CD8-positive, alpha-beta memory T cell (primary cell): ENCODE measurements at regions of chr1 and their contacts with region 1.

Region 1: DNA sequence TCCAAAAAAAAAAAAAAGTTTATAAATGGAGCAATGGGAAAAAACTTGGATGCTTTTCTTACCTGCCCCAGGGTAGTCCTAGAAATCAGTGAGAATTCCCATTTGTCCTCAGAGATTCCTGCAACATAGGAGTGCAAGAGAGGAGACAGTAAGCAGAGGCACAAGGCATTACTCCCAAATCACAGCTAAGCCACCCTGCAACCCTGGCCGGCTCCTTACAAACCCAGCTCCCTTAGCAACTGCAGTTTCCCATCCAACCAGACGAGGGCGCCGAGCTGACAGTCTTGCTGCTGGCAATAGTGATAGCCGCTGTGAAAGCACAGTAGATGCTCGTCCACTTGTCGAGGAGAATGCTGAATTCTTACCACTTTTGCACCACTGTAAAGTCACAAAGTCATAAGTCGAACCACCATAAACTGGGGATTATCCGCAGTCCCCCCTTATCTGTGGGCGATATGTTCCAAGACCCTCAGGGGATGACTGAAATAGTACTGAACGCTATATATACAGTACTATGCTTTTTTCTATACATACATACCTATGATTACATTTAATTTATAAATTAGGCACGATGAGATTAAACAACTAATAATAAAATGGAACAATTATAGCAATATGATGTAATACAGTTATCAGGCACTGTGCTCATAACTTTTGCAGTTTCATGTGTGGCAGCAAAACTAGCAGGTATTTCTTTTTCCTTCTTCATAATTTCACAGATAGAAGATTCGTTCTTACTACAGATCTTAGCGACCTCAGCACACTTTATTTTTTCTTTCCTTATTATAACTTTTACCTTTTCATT is 6.0 kb upstream of the PITHD1 start:
- DNase-seq: peak; percentile 71 to 87 (median 75)
- H3K4me3 ChIP-seq: no peak overlapping the region
- H3K4me3 Mint-ChIP-seq: peak overlapping the region in 2 of 7 donors; percentile 43 to 47
- H3K27ac ChIP-seq: no peak overlapping the region
- H3K27ac Mint-ChIP-seq: peak overlapping the region in 4 of 8 donors; percentile 9 to 47 (median 32)
- H3K4me1 ChIP-seq: peaks cover 8% of the 10 kb centered on the region
- H3K4me1 Mint-ChIP-seq: peaks cover 16 to 25% (median 24%) of the 10 kb centered on the region in 3 donors
- H3K27me3 ChIP-seq: no peaks in the 10 kb centered on the region
- H3K27me3 Mint-ChIP-seq: no peaks in the 10 kb centered on the region

Region 2: GRCh38 chr1:23417570-23417969 is 354.7 kb before region 1 on chr1:
- CTCF ChIA-PET with region 1: no interaction called
- POLR2A ChIA-PET with region 1: no interaction called
- DNase-seq: peak in 1 of 5 donors; percentile 23
- H3K4me3 ChIP-seq: no peak overlapping the region
- H3K4me3 Mint-ChIP-seq: no peak overlapping the region
- H3K27ac ChIP-seq: no peak overlapping the region
- H3K27ac Mint-ChIP-seq: no peak overlapping the region
- H3K4me1 ChIP-seq: peaks cover 12% of the 10 kb centered on the region
- H3K4me1 Mint-ChIP-seq: peaks cover 8 to 10% (median 8%) of the 10 kb centered on the region in 3 donors
- H3K27me3 ChIP-seq: no peaks in the 10 kb centered on the region
- H3K27me3 Mint-ChIP-seq: peaks cover 2 to 3% of the 10 kb centered on the region in 2 donors

Region 3: GRCh38 chr1:23854568-23854967 is 82.3 kb after region 1 on chr1:
- CTCF ChIA-PET with region 1: no interaction called
- POLR2A ChIA-PET with region 1: no interaction called
- DNase-seq: no peak
- H3K4me3 ChIP-seq: no peak overlapping the region
- H3K4me3 Mint-ChIP-seq: peak overlapping the region in 1 of 7 donors; percentile 24
- H3K27ac ChIP-seq: no peak overlapping the region
- H3K27ac Mint-ChIP-seq: peak overlapping the region in 1 of 8 donors; percentile 2
- H3K4me1 ChIP-seq: no peaks in the 10 kb centered on the region
- H3K4me1 Mint-ChIP-seq: peaks cover 0 to 9% (median 3%) of the 10 kb centered on the region in 3 donors
- H3K27me3 ChIP-seq: no peaks in the 10 kb centered on the region
- H3K27me3 Mint-ChIP-seq: no peaks in the 10 kb centered on the region

Region 4: DNA sequence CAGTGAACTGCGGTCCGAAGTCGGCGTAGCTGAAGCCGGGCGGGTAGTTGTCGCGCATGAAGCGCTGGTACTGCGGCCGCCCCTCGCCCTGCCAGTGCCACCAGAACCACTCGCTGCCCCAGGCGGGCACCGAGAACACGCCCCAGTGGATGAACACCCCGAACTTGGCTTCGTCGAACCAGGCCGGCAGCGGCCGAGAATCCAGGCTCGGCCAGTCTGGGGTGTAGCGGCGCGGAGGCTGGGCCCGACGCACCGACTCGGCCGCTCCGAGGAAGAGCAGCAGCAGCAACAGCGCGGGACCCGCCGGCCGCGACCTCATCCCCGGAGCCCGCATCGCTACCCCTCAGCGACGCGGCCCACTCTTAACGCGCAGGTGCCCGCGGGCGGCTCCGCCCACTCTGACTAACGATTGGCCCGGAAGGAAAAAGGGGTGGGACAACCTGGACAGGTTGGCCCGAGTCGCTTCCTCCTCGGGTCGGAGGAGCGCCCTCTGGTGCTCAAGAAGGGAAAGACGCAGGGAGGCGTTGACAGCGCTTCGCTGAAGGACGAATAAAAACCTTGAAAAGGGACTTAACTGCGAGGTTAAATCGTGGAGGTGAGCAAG is 95.8 kb after region 1 on chr1 and contains the start of gene FUCA1:
- CTCF ChIA-PET with region 1: interaction called, 11 read pairs
- POLR2A ChIA-PET with region 1: no interaction called
- DNase-seq: peak; percentile 95 to 98 (median 95)
- H3K4me3 ChIP-seq: peak within 1 kb of the TSS; percentile 61
- H3K4me3 Mint-ChIP-seq: peak within 1 kb of the TSS; percentile 82 to 93 (median 86)
- H3K27ac ChIP-seq: peak within 1 kb of the TSS; percentile 54
- H3K27ac Mint-ChIP-seq: peak within 1 kb of the TSS; percentile 42 to 95 (median 86)
- H3K4me1 ChIP-seq: peaks cover 22% of the 10 kb centered on the region
- H3K4me1 Mint-ChIP-seq: peaks cover 18 to 33% (median 22%) of the 10 kb centered on the region in 3 donors
- H3K27me3 ChIP-seq: no peaks in the 10 kb centered on the region
- H3K27me3 Mint-ChIP-seq: no peaks in the 10 kb centered on the region
- total RNA-seq, gene FUCA1: 14.1 to 15.7 TPM

Region 5: DNA sequence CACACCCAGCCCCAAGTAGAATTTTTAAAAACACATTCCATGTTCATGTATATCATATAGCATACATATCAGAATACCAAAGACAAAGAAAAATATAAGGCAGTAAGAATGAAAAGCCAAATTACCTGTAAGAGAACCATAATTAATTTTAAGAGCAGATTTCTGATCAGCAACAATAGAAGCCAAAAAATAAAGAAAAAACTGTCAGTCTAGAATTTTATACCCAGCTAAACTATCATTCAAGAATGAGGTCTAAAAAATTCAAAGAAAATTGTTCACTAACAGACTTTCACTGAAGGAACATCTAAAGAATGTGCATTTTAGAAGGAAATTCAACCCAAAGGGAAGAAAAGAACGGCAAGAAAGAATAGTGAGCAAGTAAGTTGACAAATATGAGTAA is 106.4 kb after region 1 on chr1:
- CTCF ChIA-PET with region 1: no interaction called
- POLR2A ChIA-PET with region 1: no interaction called
- DNase-seq: no peak
- H3K4me3 ChIP-seq: no peak overlapping the region
- H3K4me3 Mint-ChIP-seq: no peak overlapping the region
- H3K27ac ChIP-seq: no peak overlapping the region
- H3K27ac Mint-ChIP-seq: no peak overlapping the region
- H3K4me1 ChIP-seq: no peaks in the 10 kb centered on the region
- H3K4me1 Mint-ChIP-seq: no peaks in the 10 kb centered on the region
- H3K27me3 ChIP-seq: no peaks in the 10 kb centered on the region
- H3K27me3 Mint-ChIP-seq: peaks cover 1 to 7% of the 10 kb centered on the region in 2 donors

Region 6: GRCh38 chr1:23916209-23917131 is 144.2 kb after region 1 on chr1:
- CTCF ChIA-PET with region 1: interaction called, 10 read pairs
- POLR2A ChIA-PET with region 1: interaction called, 3 read pairs
- DNase-seq: peak; percentile 40 to 71 (median 62)
- H3K4me3 ChIP-seq: no peak overlapping the region
- H3K4me3 Mint-ChIP-seq: no peak overlapping the region
- H3K27ac ChIP-seq: no peak overlapping the region
- H3K27ac Mint-ChIP-seq: peak overlapping the region in 4 of 8 donors; percentile 57 to 91 (median 81)
- H3K4me1 ChIP-seq: peaks cover 27% of the 10 kb centered on the region
- H3K4me1 Mint-ChIP-seq: peaks cover 33 to 40% (median 35%) of the 10 kb centered on the region in 3 donors
- H3K27me3 ChIP-seq: no peaks in the 10 kb centered on the region
- H3K27me3 Mint-ChIP-seq: no peaks in the 10 kb centered on the region